Naive thymus-derived CD4-positive, alpha-beta T cell (primary cell): ENCODE measurements at regions of chr15 and their contacts with region 1.

Region 1: DNA sequence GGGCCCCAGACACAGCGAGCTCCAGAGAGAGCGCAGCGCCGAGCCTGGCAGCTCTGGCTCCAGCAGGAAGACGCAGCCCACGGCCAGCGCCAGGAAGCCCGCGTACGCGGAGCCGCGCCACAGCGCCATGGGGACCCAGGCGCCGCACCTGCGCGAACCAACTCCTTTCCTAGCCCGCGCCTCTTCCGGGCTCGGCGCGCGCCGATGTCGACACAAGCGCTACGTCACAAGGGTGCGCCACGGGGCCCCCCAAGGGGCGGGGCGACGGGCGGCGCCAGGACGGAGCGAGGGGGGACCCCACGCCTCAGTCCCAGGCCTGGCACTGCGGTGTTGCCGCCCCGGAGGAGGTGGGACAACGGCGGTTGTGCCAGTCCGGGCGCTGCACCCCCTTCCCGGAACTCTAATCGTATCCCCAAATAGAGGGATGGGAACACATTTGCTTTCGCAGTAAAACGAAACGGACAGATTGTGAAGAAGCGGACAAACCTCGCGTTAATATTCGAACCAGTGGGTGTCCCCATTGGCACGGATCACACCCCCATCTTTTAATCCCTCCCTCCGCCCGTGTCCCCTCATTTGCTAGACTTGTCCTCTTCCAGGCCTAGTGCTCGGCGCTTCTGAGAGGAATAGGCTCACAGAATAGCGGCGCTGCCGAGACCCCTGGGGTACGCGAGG is at the start of gene ADPGK:
- DNase-seq: peak; percentile 90 to 100 (median 97)
- ATAC-seq: peak; percentile 90
- H3K4me3 ChIP-seq: peak within 1 kb of the TSS; percentile 87
- H3K4me3 Mint-ChIP-seq: peak within 1 kb of the TSS; percentile 87 to 98 (median 95)
- H3K27ac ChIP-seq: peak within 1 kb of the TSS; percentile 89
- H3K27ac Mint-ChIP-seq: peak within 1 kb of the TSS; percentile 95 to 99 (median 98)
- H3K4me1 ChIP-seq: peaks cover 19 to 39% of the 10 kb centered on the region in 2 donors
- H3K4me1 Mint-ChIP-seq: peaks cover 31 to 56% (median 49%) of the 10 kb centered on the region in 7 donors
- H3K27me3 ChIP-seq: no peaks in the 10 kb centered on the region
- H3K27me3 Mint-ChIP-seq: no peaks in the 10 kb centered on the region
- total RNA-seq, gene ADPGK: 96.2 to 129 (median 98.2) TPM

Region 2: GRCh38 chr15:72272213-72273002 is 511.3 kb before region 1 on chr15 and contains the start of gene PARP6:
- CTCF ChIA-PET with region 1: no interaction called
- POLR2A ChIA-PET with region 1: no interaction called
- intact Hi-C with region 1: loop called (anchors 1 kb)
- DNase-seq: peak; percentile 94 to 100 (median 99)
- ATAC-seq: peak; percentile 96
- H3K4me3 ChIP-seq: peak within 1 kb of the TSS; percentile 71
- H3K4me3 Mint-ChIP-seq: peak within 1 kb of the TSS; percentile 87 to 95 (median 90)
- H3K27ac ChIP-seq: peak within 1 kb of the TSS; percentile 90
- H3K27ac Mint-ChIP-seq: peak within 1 kb of the TSS; percentile 87 to 96 (median 93)
- H3K4me1 ChIP-seq: peaks cover 18 to 25% of the 10 kb centered on the region in 2 donors
- H3K4me1 Mint-ChIP-seq: peaks cover 24 to 53% (median 44%) of the 10 kb centered on the region in 7 donors
- H3K27me3 ChIP-seq: no peaks in the 10 kb centered on the region
- H3K27me3 Mint-ChIP-seq: no peaks in the 10 kb centered on the region
- total RNA-seq, gene PARP6: 75.8 to 129 (median 127) TPM

Region 3: DNA sequence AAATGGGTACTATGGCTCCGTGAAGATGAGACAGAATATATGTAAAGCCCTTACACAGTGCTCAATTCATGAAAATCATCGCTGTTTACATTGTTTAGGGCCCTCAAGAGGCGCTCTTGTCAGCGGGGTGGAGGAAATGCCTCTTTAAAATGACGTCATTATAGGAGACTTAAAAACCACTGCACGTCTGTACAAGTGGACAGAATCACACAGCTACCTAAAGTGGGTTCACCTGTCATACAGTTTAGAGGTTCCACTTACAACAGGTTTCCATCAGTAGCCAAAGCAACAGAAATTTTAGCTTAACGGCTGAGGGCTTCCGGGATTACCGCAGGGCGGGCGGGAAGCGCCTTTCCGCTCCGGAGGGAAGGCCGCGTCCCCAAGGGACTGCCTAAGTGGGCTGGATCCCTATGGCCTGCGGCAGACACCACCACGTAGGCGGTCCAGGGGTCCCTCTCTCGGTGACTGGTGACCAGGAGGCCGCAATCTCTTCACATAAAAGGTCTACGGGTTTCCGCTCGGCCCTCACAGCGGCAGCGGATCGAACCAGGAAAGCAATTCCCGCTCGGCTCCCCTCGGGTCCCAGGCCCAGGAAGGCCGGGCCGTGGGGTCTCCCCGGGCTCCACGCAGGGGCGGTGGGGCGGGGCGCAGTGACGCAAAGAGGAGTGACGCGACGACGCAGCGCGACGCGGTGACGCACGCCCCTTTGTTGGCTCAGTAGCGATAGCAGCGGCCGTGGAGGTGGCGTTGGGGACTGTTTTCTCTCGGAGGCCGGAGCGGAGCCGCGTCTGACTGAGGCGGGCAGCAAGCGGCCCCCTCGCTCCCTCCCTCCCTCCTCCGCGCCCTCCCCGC is 309.9 kb before region 1 on chr15 and contains the start of gene ARIH1:
- CTCF ChIA-PET with region 1: no interaction called
- POLR2A ChIA-PET with region 1: no interaction called
- intact Hi-C with region 1: loop called (anchors 1 kb)
- DNase-seq: peak; percentile 93 to 98 (median 97)
- ATAC-seq: peak; percentile 91
- H3K4me3 ChIP-seq: peak within 1 kb of the TSS; percentile 95
- H3K4me3 Mint-ChIP-seq: peak within 1 kb of the TSS; percentile 92 to 98 (median 96)
- H3K27ac ChIP-seq: peak within 1 kb of the TSS; percentile 99
- H3K27ac Mint-ChIP-seq: peak within 1 kb of the TSS; percentile 87 to 100 (median 99)
- H3K4me1 ChIP-seq: peaks cover 38 to 39% of the 10 kb centered on the region in 2 donors
- H3K4me1 Mint-ChIP-seq: peaks cover 35 to 59% (median 47%) of the 10 kb centered on the region in 7 donors
- H3K27me3 ChIP-seq: no peaks in the 10 kb centered on the region
- H3K27me3 Mint-ChIP-seq: no peaks in the 10 kb centered on the region
- total RNA-seq, gene ARIH1: 128 to 191 (median 181) TPM

Region 4: GRCh38 chr15:72740219-72740618 is 43.5 kb before region 1 on chr15:
- CTCF ChIA-PET with region 1: interaction called, 4 read pairs
- POLR2A ChIA-PET with region 1: interaction called, 6 read pairs
- intact Hi-C with region 1: loop called (anchors 1 to 2 kb)
- DNase-seq: peak in 7 of 9 donors; percentile 20 to 60 (median 37)
- ATAC-seq: peak; percentile 72
- H3K4me3 ChIP-seq: peak overlapping the region; percentile 2
- H3K4me3 Mint-ChIP-seq: peak overlapping the region; percentile 31 to 81 (median 69)
- H3K27ac ChIP-seq: peak overlapping the region; percentile 59
- H3K27ac Mint-ChIP-seq: peak overlapping the region; percentile 43 to 99 (median 84)
- H3K4me1 ChIP-seq: peaks cover 18 to 20% of the 10 kb centered on the region in 2 donors
- H3K4me1 Mint-ChIP-seq: peaks cover 22 to 47% (median 35%) of the 10 kb centered on the region in 7 donors
- H3K27me3 ChIP-seq: no peaks in the 10 kb centered on the region
- H3K27me3 Mint-ChIP-seq: no peaks in the 10 kb centered on the region

Region 5: DNA sequence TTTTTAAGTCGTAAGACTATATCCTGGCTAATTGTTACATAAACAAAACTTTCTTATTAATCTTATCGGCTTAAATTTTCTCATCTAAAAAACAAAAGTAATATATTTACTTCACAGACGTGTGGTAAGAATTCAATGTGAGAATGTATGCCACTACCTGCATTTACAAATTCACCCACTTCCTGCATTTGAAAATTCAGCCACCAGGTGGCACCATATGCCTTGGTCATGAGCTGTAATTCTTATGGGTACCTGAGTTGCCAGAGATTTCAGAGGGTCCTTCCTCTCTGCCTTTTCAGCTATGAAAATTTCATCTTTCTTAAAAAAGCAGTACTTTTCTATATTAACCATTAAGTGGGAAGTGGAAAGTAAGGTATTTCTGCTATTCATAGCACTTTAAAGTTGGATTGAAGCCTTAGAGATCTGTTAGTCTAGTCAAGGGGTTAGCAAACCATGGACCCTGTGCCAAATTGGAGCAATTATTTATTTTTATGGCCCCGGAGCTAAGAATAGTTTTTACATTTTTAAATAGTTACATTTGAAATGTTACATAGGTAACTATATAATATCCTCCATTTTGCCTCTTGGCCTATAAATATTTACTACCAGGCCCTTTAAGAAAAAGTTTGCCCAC is 457.3 kb after region 1 on chr15:
- CTCF ChIA-PET with region 1: no interaction called
- POLR2A ChIA-PET with region 1: no interaction called
- intact Hi-C with region 1: loop called in 1 of 2 experiments (anchors 5 kb)
- DNase-seq: peak; percentile 30 to 72 (median 53)
- ATAC-seq: no peak
- H3K4me3 ChIP-seq: no peak overlapping the region
- H3K4me3 Mint-ChIP-seq: no peak overlapping the region
- H3K27ac ChIP-seq: no peak overlapping the region
- H3K27ac Mint-ChIP-seq: no peak overlapping the region
- H3K4me1 ChIP-seq: no peaks in the 10 kb centered on the region
- H3K4me1 Mint-ChIP-seq: peaks cover 0 to 6% (median 0%) of the 10 kb centered on the region in 7 donors
- H3K27me3 ChIP-seq: no peaks in the 10 kb centered on the region
- H3K27me3 Mint-ChIP-seq: no peaks in the 10 kb centered on the region

Region 6: GRCh38 chr15:73697033-73697467 is 913.4 kb after region 1 on chr15:
- CTCF ChIA-PET with region 1: no interaction called
- POLR2A ChIA-PET with region 1: no interaction called
- intact Hi-C with region 1: loop called in 1 of 2 experiments (anchors 10 kb)
- DNase-seq: peak; percentile 34 to 80 (median 67)
- ATAC-seq: peak; percentile 93
- H3K4me3 ChIP-seq: no peak overlapping the region
- H3K4me3 Mint-ChIP-seq: peak overlapping the region in 8 of 10 donors; percentile 10 to 61 (median 44)
- H3K27ac ChIP-seq: no peak overlapping the region
- H3K27ac Mint-ChIP-seq: peak overlapping the region in 1 of 9 donors; percentile 74
- H3K4me1 ChIP-seq: peaks cover 8 to 18% of the 10 kb centered on the region in 2 donors
- H3K4me1 Mint-ChIP-seq: peaks cover 13 to 53% (median 18%) of the 10 kb centered on the region in 7 donors
- H3K27me3 ChIP-seq: peaks cover 3 to 8% of the 10 kb centered on the region in 2 donors
- H3K27me3 Mint-ChIP-seq: peaks cover 54 to 69% (median 65%) of the 10 kb centered on the region in 5 donors